ENCODE measurements at regions of chr16 and their contacts with region 1.

Region 1: DNA sequence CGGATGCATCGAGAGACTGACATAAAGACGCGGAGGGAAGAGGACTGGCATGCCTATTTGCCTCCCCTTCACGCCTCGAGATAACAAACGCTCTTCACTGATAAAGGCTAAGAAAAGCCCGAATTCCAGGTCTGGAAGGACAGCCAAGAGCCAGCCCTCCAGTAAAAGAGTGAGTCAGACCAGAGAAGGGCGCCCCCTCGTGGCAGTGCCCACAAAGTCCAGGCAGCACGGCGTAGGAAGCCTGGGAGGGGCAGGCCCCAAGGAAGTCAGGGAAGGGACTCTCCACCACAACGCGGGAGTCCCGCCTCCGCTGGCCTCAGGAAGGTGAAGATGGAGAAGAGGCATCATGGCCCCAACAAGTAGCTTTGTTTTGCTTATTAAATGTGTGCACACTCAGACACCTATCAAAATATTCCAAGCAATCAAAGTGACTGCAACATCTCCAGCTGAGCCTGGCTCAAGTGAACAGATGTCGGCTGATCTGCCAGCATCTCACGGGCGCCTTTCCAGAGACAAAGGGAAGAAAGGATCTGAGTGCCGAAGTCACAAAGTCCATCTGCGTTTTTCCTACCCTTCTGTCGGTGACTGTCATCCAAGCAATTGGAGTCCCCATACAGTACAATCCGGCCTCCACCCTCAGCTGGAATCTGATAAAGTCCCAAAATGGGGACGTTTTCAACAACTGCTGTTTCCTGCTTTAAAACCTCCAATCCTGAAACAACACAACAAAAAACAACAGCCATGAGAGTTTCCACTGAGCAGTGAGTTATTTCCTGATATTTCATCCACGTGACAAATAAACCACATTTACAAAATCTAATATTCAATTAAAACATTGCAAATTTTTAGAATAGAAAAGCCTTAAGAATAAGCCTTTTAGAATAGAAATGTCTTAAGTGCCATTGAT is 20.4 kb upstream of the SLC38A8 start:
- DNase-seq: peak; percentile 70
- H3K4me3 ChIP-seq: no peak overlapping the region
- H3K27ac ChIP-seq: no peak overlapping the region
- H3K4me1 ChIP-seq: no peaks in the 10 kb centered on the region
- H3K27me3 ChIP-seq: no peaks in the 10 kb centered on the region
- CTCF ChIP-seq: peak; percentile 72 to 85 (median 84)
- EP300 ChIP-seq: no peak
- POLR2A ChIP-seq: no peak

Region 2: DNA sequence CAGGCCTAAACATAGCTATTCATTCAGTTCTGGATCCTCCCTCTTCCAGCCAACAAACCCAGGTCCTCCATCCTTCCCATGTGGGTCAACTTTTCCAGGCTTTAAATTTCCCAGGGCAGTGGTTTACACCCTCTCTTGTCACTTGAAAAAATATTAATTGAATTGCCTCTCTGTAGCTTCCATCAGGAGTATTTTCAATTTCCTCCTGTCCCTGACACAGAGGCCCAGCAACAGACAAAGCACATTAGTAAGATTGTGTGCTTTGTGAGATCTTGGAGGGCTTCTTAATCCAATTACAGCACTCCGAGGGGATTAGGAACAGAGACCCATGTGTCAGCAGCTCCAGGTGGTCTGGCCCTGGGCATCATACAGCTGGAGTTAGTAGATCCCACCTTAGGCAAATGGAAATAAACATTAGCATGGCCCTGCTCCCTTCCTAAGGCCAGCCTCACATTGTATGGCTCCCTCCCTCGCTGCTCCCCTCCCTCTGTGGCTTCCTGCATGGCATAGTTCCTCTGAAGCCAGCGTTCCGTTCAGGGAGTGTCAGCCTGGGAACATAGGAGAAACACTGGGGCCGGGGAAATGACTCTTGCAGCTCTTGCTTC is 388.0 kb before region 1 on chr16:
- in situ Hi-C with region 1: no loop called
- intact Hi-C with region 1: no loop called
- DNase-seq: no peak
- H3K4me3 ChIP-seq: no peak overlapping the region
- H3K27ac ChIP-seq: no peak overlapping the region
- H3K4me1 ChIP-seq: no peaks in the 10 kb centered on the region
- H3K27me3 ChIP-seq: no peaks in the 10 kb centered on the region
- CTCF ChIP-seq: no peak
- EP300 ChIP-seq: no peak
- POLR2A ChIP-seq: no peak

Region 3: DNA sequence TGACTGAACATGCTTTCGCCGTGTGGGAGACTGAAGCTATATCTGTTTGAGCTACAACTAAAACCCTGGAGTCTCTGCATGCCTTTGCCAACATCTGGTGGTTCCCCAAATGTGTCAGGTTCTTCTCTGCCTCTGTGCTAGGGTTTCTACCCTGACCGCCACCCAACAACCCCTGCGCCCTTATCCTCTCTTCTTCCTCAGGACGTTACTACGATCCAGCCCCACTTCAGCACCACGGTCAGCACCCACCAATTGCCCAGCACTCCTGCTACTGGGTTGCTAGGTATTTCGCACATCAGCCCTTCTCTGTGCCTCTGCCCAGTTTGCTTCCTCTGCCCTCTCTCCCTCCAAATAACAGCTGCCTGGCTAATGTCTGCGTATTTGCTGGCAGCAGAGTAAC is 361.5 kb before region 1 on chr16:
- in situ Hi-C with region 1: no loop called
- intact Hi-C with region 1: no loop called
- DNase-seq: no peak
- H3K4me3 ChIP-seq: no peak overlapping the region
- H3K27ac ChIP-seq: no peak overlapping the region
- H3K4me1 ChIP-seq: no peaks in the 10 kb centered on the region
- H3K27me3 ChIP-seq: no peaks in the 10 kb centered on the region
- CTCF ChIP-seq: no peak
- EP300 ChIP-seq: no peak
- POLR2A ChIP-seq: no peak

Region 4: DNA sequence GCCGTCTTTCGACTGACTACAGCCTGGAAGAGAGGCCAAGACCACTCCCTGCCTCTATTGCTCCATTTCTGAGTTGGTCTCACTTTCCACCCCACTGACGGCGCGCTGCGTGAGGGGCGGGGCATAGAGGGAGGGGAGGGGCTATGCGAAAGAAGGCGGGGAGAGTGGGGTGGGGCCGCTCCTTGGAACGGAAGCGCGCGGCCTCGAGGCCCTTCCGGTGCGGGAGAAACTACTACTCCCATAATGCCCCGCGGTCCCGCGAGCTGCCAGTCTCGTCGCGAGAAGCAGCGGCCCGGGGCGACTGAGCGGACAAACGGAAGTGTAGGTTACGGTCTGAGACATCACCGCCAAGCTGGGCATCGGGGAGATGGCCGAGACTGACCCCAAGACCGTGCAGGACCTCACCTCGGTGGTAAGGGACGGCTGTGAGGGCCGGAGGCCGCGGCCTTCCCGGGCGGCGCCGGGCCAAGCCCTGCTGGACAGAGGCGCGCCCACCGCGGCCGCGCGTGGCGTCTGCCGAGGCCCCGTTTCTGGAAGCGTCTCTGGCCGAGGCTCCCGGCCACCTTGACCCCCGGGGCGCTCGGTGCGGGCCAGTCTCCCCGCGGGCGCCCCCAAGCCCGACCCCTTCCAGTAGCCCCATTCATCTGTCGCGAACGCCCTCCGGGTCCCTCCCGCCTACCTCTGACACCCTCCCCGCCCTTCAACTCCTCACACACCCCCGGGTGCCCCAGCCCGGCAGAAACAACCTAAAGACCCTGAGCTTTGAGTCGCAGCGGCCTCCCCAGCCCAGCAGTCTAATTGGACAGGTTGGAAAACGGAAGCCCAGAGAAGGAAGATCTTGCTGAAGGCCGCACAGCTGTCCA is 255.0 kb before region 1 on chr16 and contains the start of gene HSBP1:
- in situ Hi-C with region 1: loop called in 3 of 4 experiments (anchors 25 kb)
- intact Hi-C with region 1: no loop called
- DNase-seq: peak; percentile 97
- H3K4me3 ChIP-seq: peak within 1 kb of the TSS; percentile 78 to 100 (median 94)
- H3K27ac ChIP-seq: peak within 1 kb of the TSS; percentile 87 to 95 (median 90)
- H3K4me1 ChIP-seq: peaks cover 7 to 35% (median 10%) of the 10 kb centered on the region in 4 donors
- H3K27me3 ChIP-seq: no peaks in the 10 kb centered on the region
- CTCF ChIP-seq: no peak
- EP300 ChIP-seq: no peak
- POLR2A ChIP-seq: peak; percentile 65
- total RNA-seq, gene HSBP1: 3.4 to 14.0 (median 10.8) TPM

Region 5: GRCh38 chr16:83826146-83826913 is 236.7 kb before region 1 on chr16:
- in situ Hi-C with region 1: loop called (anchors 10 to 25 kb)
- intact Hi-C with region 1: loop called (anchors 10 kb)
- DNase-seq: peak; percentile 89
- H3K4me3 ChIP-seq: no peak overlapping the region
- H3K27ac ChIP-seq: no peak overlapping the region
- H3K4me1 ChIP-seq: peaks cover 0 to 6% (median 4%) of the 10 kb centered on the region in 4 donors
- H3K27me3 ChIP-seq: no peaks in the 10 kb centered on the region
- CTCF ChIP-seq: peak; percentile 86 to 95 (median 88)
- EP300 ChIP-seq: no peak
- POLR2A ChIP-seq: no peak

Region 6: GRCh38 chr16:83878838-83879237 is 184.1 kb before region 1 on chr16:
- in situ Hi-C with region 1: no loop called
- intact Hi-C with region 1: no loop called
- DNase-seq: no peak
- H3K4me3 ChIP-seq: no peak overlapping the region
- H3K27ac ChIP-seq: no peak overlapping the region
- H3K4me1 ChIP-seq: no peaks in the 10 kb centered on the region
- H3K27me3 ChIP-seq: peaks cover 7% of the 10 kb centered on the region
- CTCF ChIP-seq: peak in 4 of 5 experiments; percentile 22 to 41 (median 27)
- EP300 ChIP-seq: no peak
- POLR2A ChIP-seq: no peak

Region 7: DNA sequence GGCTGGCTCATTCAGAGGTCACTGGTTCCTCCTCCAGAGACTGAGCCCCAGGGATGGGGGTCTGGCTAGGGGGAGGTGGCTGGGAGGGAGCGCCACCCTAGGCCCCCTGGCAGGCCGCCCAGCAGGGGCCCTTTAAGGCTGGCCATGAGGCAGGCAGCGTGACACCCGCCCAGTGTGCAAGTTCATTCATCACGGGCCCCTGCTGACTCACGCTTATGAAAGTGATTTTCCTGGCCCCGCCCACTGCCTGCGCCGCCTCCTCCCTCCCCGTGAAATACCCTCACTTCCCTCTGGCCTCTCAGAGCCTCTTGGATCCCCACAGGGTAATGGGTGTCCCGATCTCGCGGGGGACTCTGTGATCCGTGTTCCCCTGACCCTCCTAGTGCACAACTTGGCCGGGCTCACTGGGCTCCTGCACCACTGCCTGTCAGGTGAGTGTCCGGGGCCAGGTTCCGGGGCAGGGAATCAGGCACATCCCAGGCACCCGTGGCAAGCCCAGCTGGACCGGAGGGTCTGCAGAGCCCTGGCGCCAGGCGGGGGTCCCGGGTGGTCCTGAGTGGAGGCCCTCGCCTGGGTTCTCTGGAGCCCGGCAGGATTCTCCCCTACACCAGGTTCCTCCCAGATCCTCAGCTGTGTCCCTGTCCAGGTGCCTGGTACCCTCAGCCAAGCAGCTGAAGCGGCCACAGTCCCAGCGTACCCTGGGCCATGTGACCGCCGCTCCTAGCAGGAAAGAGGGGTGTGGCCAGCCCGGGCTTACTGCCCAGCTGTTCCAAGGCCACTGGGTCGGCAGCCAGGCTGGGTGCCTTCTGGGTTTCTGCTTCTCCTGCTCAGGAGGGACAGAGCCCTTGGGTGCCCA is 109.8 kb before region 1 on chr16 and contains the start of gene OSGIN1:
- in situ Hi-C with region 1: loop called in 3 of 4 experiments (anchors 25 kb)
- intact Hi-C with region 1: no loop called
- DNase-seq: peak; percentile 96
- H3K4me3 ChIP-seq: peak within 1 kb of the TSS; percentile 48 to 73 (median 54)
- H3K27ac ChIP-seq: peak within 1 kb of the TSS; percentile 91 to 96 (median 94)
- H3K4me1 ChIP-seq: peaks cover 11 to 30% (median 22%) of the 10 kb centered on the region in 4 donors
- H3K27me3 ChIP-seq: no peaks in the 10 kb centered on the region
- CTCF ChIP-seq: no peak
- EP300 ChIP-seq: no peak
- POLR2A ChIP-seq: peak; percentile 98
- total RNA-seq, gene OSGIN1: 10.7 to 26.2 (median 16.7) TPM

Region 8: GRCh38 chr16:83964684-83965443 is 98.1 kb before region 1 on chr16:
- in situ Hi-C with region 1: loop called in 3 of 4 experiments (anchors 25 kb)
- intact Hi-C with region 1: loop called (anchors 5 kb)
- DNase-seq: no peak
- H3K4me3 ChIP-seq: no peak overlapping the region
- H3K27ac ChIP-seq: no peak overlapping the region
- H3K4me1 ChIP-seq: no peaks in the 10 kb centered on the region
- H3K27me3 ChIP-seq: peaks cover 13% of the 10 kb centered on the region
- CTCF ChIP-seq: no peak
- EP300 ChIP-seq: no peak
- POLR2A ChIP-seq: no peak

Region 9: GRCh38 chr16:84044118-84044488 is 18.9 kb before region 1 on chr16:
- in situ Hi-C with region 1: no loop called
- intact Hi-C with region 1: no loop called
- DNase-seq: no peak
- H3K4me3 ChIP-seq: no peak overlapping the region
- H3K27ac ChIP-seq: no peak overlapping the region
- H3K4me1 ChIP-seq: no peaks in the 10 kb centered on the region
- H3K27me3 ChIP-seq: peaks cover 34% of the 10 kb centered on the region
- CTCF ChIP-seq: peak in 3 of 5 experiments; percentile 18 to 27 (median 24)
- EP300 ChIP-seq: no peak
- POLR2A ChIP-seq: no peak

Measured in transverse colon (tissue), 4 donors.